ENCODE measurements at regions of chr20 and their contacts with region 1.

Region 1: DNA sequence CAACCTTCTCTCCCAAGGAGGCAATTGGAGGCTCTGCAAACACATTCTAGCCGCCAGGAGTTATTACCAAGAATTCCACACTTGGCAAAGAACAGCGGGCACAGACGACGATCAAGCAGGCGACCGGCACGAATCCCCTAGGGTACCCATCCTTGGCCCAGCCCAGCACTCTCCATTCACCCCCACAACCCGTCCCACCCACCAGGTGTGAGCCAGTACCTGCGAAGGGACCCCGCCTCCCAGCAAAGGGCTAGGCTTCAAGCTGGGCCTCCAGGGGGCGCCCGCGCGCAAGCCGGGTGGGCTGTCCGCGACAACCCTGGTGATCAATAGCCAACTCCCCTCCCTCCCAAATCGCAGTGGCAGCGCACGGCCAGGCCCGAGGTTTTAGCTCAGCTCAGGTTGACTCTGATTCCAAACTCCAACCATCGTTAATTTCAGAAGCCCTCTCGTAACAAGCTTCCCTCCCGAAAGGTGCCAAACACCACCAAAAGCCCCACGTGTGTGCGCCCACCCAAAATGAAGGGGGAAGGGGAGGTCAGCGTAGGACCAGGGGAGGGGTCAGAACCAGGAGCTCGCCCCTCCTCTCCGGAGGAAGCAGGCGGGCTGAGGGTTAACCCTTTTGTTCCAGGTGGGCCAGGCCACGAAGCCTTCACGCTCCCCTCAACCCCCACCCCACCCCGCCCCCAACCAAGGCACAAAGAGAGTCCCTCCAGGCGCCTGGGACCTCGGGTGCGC is 2.1 kb downstream of the SALL4 start:
- DNase-seq: peak in 4 of 5 donors; percentile 14 to 33 (median 20)
- H3K4me3 ChIP-seq: no peak overlapping the region
- H3K4me3 Mint-ChIP-seq: peak overlapping the region in 7 of 8 donors; percentile 12 to 63 (median 48)
- H3K27ac ChIP-seq: no peak overlapping the region
- H3K27ac Mint-ChIP-seq: no peak overlapping the region
- H3K4me1 ChIP-seq: peaks cover 6% of the 10 kb centered on the region
- H3K4me1 Mint-ChIP-seq: peaks cover 1 to 24% (median 6%) of the 10 kb centered on the region in 4 donors
- H3K27me3 ChIP-seq: peaks cover 13% of the 10 kb centered on the region
- H3K27me3 Mint-ChIP-seq: peaks cover 46 to 47% of the 10 kb centered on the region in 2 donors

Region 2: DNA sequence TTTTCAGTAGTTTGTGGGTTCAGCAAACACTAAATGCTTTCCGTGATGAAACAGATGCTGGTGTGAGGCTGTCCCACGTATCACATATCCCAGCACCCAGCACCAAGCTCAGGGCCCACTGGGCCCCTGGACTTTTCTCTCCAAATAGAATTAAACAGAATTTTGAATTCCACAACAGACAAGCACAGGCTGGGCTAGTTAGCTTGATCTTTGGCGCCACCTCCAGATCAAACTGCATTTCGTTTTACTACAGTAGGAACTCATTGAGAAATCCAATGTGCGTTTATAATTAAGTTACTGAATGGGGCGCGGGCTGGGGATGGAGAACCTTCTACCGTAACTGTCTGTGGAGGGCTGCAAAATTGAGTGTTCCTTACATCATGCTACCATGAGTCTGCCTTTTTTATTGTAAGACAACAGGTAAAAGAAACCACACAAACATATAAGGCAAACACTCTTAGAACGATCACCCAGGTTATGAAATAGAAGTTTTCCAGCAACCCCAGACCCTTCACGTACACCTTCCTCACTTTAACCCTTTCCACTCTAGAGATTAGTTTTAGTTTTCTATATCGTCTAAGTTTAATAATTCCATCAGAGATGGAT is 283.5 kb after region 1 on chr20:
- CTCF ChIA-PET with region 1: interaction called, 27 read pairs
- POLR2A ChIA-PET with region 1: no interaction called
- intact Hi-C with region 1: no loop called
- DNase-seq: peak in 3 of 5 donors; percentile 12 to 34 (median 30)
- H3K4me3 ChIP-seq: no peak overlapping the region
- H3K4me3 Mint-ChIP-seq: no peak overlapping the region
- H3K27ac ChIP-seq: no peak overlapping the region
- H3K27ac Mint-ChIP-seq: no peak overlapping the region
- H3K4me1 ChIP-seq: peaks cover 7% of the 10 kb centered on the region
- H3K4me1 Mint-ChIP-seq: peaks cover 5 to 10% (median 9%) of the 10 kb centered on the region in 4 donors
- H3K27me3 ChIP-seq: no peaks in the 10 kb centered on the region
- H3K27me3 Mint-ChIP-seq: no peaks in the 10 kb centered on the region

Measured in CD4-positive, alpha-beta memory T cell (primary cell).